ENCODE measurements at regions of chr15 and their contacts with region 1.

Region 1: GRCh38 chr15:67188551-67189218 is 65.8 kb downstream of the AAGAB start:
- DNase-seq: peak; percentile 88
- H3K4me3 ChIP-seq: no peak overlapping the region
- H3K27ac ChIP-seq: peak overlapping the region; percentile 74 to 87 (median 80)
- H3K4me1 ChIP-seq: peaks cover 0 to 77% (median 74%) of the 10 kb centered on the region in 4 donors
- H3K27me3 ChIP-seq: no peaks in the 10 kb centered on the region
- CTCF ChIP-seq: no peak
- EP300 ChIP-seq: peak in 2 of 4 donors; percentile 53 to 55
- POLR2A ChIP-seq: no peak

Region 2: DNA sequence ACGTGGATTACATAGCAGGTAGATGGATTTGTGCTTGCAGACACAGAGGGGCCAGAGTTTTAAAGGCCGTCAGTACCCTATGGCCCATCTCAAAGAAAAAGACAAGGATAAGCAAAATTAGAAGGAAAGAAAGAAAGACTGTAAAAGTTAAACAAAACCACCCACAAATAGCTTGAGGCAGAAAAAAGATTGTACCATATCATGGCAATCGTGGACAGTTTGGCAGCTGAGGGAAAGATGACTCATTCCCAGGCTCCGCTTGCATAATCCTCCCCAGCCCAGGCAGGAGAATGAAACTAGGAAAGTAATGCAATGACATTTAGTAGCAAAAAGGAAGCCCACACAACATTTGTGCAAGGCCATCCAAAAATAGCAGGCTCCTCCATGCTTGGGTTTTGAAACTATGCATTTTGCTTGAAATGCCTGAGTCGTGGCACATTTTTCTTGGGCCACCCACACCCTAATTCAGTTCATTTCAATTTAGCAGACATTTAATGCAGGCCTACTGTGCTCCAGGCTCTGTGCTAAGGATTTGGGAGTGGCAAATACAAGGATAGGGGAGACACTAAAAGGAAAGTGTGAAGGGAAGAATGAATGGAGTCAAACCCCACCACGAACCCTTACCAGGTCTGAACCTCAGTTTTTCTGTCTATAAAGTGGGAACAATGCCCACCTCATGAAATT is 164.2 kb before region 1 on chr15:
- intact Hi-C with region 1: loop called (anchors 5 kb)
- DNase-seq: peak; percentile 92
- H3K4me3 ChIP-seq: no peak overlapping the region
- H3K27ac ChIP-seq: peak overlapping the region; percentile 63 to 82 (median 78)
- H3K4me1 ChIP-seq: peaks cover 3 to 37% (median 33%) of the 10 kb centered on the region in 4 donors
- H3K27me3 ChIP-seq: no peaks in the 10 kb centered on the region
- CTCF ChIP-seq: no peak
- EP300 ChIP-seq: peak in 1 of 4 donors; percentile 53
- POLR2A ChIP-seq: no peak

Region 3: GRCh38 chr15:67146875-67147381 is 41.8 kb before region 1 on chr15:
- intact Hi-C with region 1: loop called (anchors 2 kb)
- DNase-seq: peak; percentile 80
- H3K4me3 ChIP-seq: no peak overlapping the region
- H3K27ac ChIP-seq: peak overlapping the region; percentile 80 to 90 (median 84)
- H3K4me1 ChIP-seq: peaks cover 0 to 88% (median 79%) of the 10 kb centered on the region in 4 donors
- H3K27me3 ChIP-seq: no peaks in the 10 kb centered on the region
- CTCF ChIP-seq: no peak
- EP300 ChIP-seq: peak in 2 of 4 donors; percentile 17 to 45
- POLR2A ChIP-seq: no peak

Measured in sigmoid colon (tissue), 7 donors.